AG04449 (cell line): ENCODE measurements at regions of chr18 and their contacts with region 1.

Region 1: DNA sequence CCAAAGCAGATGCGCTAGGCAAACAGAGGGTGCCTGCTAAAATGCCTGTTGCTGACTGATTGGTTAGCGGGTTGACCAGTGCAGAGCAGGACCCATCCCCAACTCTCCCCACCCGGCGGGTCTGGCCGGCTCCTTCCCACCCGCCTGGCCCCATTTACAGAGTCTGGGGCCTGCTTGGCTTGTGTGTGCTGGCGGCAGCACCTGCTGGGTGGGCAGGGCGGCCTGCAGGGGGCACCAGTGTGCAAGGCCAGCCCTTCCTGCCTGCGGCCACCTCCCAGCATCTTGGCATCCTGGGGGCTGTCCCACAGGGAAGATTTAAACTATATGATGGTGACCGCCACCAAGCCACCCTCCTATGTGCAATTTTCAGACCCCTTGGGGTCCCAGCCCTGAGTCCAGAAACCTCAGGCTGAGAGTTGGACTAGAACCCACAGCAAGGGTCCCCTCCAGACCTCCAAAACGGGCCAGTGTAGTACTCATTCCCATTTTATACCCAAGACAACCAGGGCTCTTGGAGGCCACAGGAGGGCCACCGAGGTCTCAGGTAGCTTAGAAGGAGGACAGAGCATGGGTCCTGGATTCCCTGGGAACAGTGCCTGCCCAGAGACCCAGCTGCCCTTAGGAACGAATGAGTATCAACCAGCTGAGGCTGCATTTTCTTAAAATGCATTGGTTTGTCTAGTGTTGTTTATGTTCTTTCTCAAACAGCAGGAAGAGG is 173.6 kb downstream of the SMAD7 start:
- DNase-seq: no peak
- H3K4me3 ChIP-seq: no peak overlapping the region
- CTCF ChIP-seq: peak; percentile 87

Region 2: DNA sequence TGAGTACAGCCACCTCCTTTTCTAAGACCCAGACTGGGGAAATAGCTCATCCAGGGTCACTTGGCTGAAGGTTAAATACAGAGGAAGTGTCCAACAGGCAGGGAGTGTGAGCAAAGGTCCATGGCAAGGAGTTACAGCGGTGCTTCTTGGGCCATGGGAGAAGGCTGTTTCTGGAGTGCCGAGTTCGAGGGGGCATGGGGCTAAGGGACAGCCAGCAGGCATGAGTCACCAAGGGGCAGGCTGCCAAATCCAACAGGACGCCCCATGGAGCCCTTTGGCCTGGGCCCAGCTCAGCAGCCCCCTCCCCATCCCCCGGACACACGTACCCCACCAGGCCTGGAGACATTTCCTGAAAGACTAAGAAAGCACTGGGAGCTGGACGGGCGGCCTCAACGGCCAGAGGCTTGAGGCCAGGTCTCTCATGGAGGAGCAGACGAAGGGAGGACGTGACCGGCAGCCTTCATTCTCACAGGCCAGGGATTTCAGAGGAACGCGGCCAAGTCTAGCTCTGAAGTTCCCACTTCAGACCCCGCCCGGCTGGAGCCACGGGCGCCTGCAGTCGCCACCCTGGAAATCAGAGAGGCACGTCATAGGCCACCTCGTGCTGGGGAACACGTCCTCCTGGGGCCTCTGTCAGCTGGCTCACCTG is 13.2 kb after region 1 on chr18:
- CTCF ChIA-PET with region 1: interaction called, 21 read pairs
- POLR2A ChIA-PET with region 1: no interaction called
- DNase-seq: no peak
- H3K4me3 ChIP-seq: no peak overlapping the region
- CTCF ChIP-seq: no peak